ENCODE measurements at regions of chr2 and their contacts with region 1.

Region 1: GRCh38 chr2:9142551-9143263 is 63.9 kb upstream of the ASAP2 start:
- DNase-seq: peak; percentile 93
- H3K4me3 ChIP-seq: peak overlapping the region in 2 of 4 donors; percentile 9 to 29
- H3K27ac ChIP-seq: peak overlapping the region; percentile 39 to 58 (median 48)
- H3K4me1 ChIP-seq: peaks cover 4 to 29% (median 19%) of the 10 kb centered on the region in 4 donors
- H3K27me3 ChIP-seq: no peaks in the 10 kb centered on the region
- CTCF ChIP-seq: peak; percentile 97 to 99 (median 99)
- EP300 ChIP-seq: no peak
- POLR2A ChIP-seq: no peak

Region 2: GRCh38 chr2:7845332-7845731 is 1297.4 kb before region 1 on chr2:
- in situ Hi-C with region 1: no loop called
- intact Hi-C with region 1: no loop called
- DNase-seq: no peak
- H3K4me3 ChIP-seq: no peak overlapping the region
- H3K27ac ChIP-seq: no peak overlapping the region
- H3K4me1 ChIP-seq: peaks cover 0 to 4% (median 0%) of the 10 kb centered on the region in 4 donors
- H3K27me3 ChIP-seq: no peaks in the 10 kb centered on the region
- CTCF ChIP-seq: no peak
- EP300 ChIP-seq: no peak
- POLR2A ChIP-seq: no peak

Region 3: GRCh38 chr2:8872821-8873432 is 269.8 kb before region 1 on chr2:
- in situ Hi-C with region 1: loop called (anchors 10 to 25 kb)
- intact Hi-C with region 1: no loop called
- DNase-seq: no peak
- H3K4me3 ChIP-seq: no peak overlapping the region
- H3K27ac ChIP-seq: no peak overlapping the region
- H3K4me1 ChIP-seq: no peaks in the 10 kb centered on the region
- H3K27me3 ChIP-seq: no peaks in the 10 kb centered on the region
- CTCF ChIP-seq: peak; percentile 49 to 62 (median 57)
- EP300 ChIP-seq: no peak
- POLR2A ChIP-seq: no peak

Region 4: GRCh38 chr2:9205963-9206948 is 63.5 kb after region 1 on chr2 and contains the start of gene ASAP2:
- in situ Hi-C with region 1: no loop called
- intact Hi-C with region 1: loop called (anchors 10 kb)
- DNase-seq: peak; percentile 78
- H3K4me3 ChIP-seq: peak within 1 kb of the TSS; percentile 73 to 97 (median 90)
- H3K27ac ChIP-seq: peak within 1 kb of the TSS; percentile 93 to 97 (median 95)
- H3K4me1 ChIP-seq: peaks cover 0 to 41% (median 28%) of the 10 kb centered on the region in 4 donors
- H3K27me3 ChIP-seq: no peaks in the 10 kb centered on the region
- CTCF ChIP-seq: peak; percentile 78 to 88 (median 84)
- EP300 ChIP-seq: no peak
- POLR2A ChIP-seq: no peak
- total RNA-seq, gene ASAP2: 33.2 to 62.1 (median 54.5) TPM

Region 5: DNA sequence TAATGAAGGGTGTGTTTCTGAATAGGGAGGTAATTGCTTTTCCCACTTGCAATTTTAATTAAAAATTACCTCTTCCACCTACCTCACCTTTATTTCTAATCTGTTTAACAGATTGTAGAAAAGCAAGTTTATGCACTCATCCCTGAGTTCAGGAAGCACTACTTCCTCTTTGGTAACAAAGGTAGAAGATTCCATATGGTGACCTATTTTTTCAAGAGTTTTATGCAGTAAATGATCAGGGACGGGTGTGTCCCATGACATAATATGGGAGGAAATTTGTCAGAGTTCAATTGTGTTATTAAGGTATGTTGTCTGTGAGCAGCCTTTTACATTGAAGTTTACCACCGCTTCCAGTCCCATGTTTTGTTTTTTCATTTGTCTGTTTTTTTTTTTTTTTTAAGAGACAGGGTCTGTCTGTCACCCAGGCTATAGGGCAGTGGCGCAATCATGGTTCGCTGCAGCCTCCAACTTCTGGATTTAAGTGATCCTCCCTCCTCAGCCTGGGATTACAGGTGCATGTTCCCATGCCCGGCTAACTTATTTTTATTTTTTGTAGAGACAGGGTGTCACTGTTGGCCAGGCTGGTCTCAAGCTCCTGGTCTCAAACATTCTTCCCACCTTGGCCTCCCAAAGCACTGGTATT is 132.1 kb after region 1 on chr2:
- in situ Hi-C with region 1: no loop called
- intact Hi-C with region 1: no loop called
- DNase-seq: no peak
- H3K4me3 ChIP-seq: no peak overlapping the region
- H3K27ac ChIP-seq: peak overlapping the region; percentile 4 to 25 (median 11)
- H3K4me1 ChIP-seq: peaks cover 11 to 42% (median 23%) of the 10 kb centered on the region in 4 donors
- H3K27me3 ChIP-seq: no peaks in the 10 kb centered on the region
- CTCF ChIP-seq: no peak
- EP300 ChIP-seq: no peak
- POLR2A ChIP-seq: no peak

Region 6: GRCh38 chr2:9333591-9334171 is 191.0 kb after region 1 on chr2:
- in situ Hi-C with region 1: no loop called
- intact Hi-C with region 1: loop called (anchors 5 kb)
- DNase-seq: peak; percentile 72
- H3K4me3 ChIP-seq: no peak overlapping the region
- H3K27ac ChIP-seq: peak overlapping the region; percentile 52 to 87 (median 84)
- H3K4me1 ChIP-seq: peaks cover 24 to 79% (median 27%) of the 10 kb centered on the region in 4 donors
- H3K27me3 ChIP-seq: no peaks in the 10 kb centered on the region
- CTCF ChIP-seq: peak; percentile 57 to 78 (median 67)
- EP300 ChIP-seq: no peak
- POLR2A ChIP-seq: no peak

Region 7: GRCh38 chr2:9347411-9347881 is 204.7 kb after region 1 on chr2:
- in situ Hi-C with region 1: loop called in 1 of 4 experiments (anchors 10 kb)
- intact Hi-C with region 1: no loop called
- DNase-seq: peak; percentile 26
- H3K4me3 ChIP-seq: no peak overlapping the region
- H3K27ac ChIP-seq: peak overlapping the region in 3 of 4 donors; percentile 34 to 58 (median 45)
- H3K4me1 ChIP-seq: no peaks in the 10 kb centered on the region
- H3K27me3 ChIP-seq: no peaks in the 10 kb centered on the region
- CTCF ChIP-seq: no peak
- EP300 ChIP-seq: no peak
- POLR2A ChIP-seq: no peak